ENCODE measurements at regions of chr9 and their contacts with region 1.

Region 1: GRCh38 chr9:94014065-94014654 is 59.0 kb upstream of the BARX1 start:
- DNase-seq: peak in 1 of 2 experiments; percentile 16
- H3K4me3 ChIP-seq: no peak overlapping the region
- H3K27ac ChIP-seq: no peak overlapping the region
- H3K4me1 ChIP-seq: no peaks in the 10 kb centered on the region
- H3K27me3 ChIP-seq: no peaks in the 10 kb centered on the region
- CTCF ChIP-seq: peak; percentile 73

Region 2: GRCh38 chr9:93984860-93985259 is 29.3 kb before region 1 on chr9:
- CTCF ChIA-PET with region 1: no interaction called
- POLR2A ChIA-PET with region 1: no interaction called
- intact Hi-C with region 1: no loop called
- DNase-seq: no peak
- H3K4me3 ChIP-seq: no peak overlapping the region
- H3K27ac ChIP-seq: no peak overlapping the region
- H3K4me1 ChIP-seq: no peaks in the 10 kb centered on the region
- H3K27me3 ChIP-seq: peaks cover 6% of the 10 kb centered on the region
- CTCF ChIP-seq: no peak

Region 3: GRCh38 chr9:94026816-94027215 is 12.7 kb after region 1 on chr9:
- CTCF ChIA-PET with region 1: no interaction called
- POLR2A ChIA-PET with region 1: no interaction called
- intact Hi-C with region 1: no loop called
- DNase-seq: no peak
- H3K4me3 ChIP-seq: no peak overlapping the region
- H3K27ac ChIP-seq: no peak overlapping the region
- H3K4me1 ChIP-seq: peaks cover 6% of the 10 kb centered on the region; the same call in 1 of the 2 replicates
- H3K27me3 ChIP-seq: no peaks in the 10 kb centered on the region
- CTCF ChIP-seq: no peak

Region 4: GRCh38 chr9:94259077-94259892 is 245.1 kb after region 1 on chr9 and contains the start of gene ZNF169:
- CTCF ChIA-PET with region 1: interaction called, 10 read pairs
- POLR2A ChIA-PET with region 1: no interaction called
- intact Hi-C with region 1: no loop called
- DNase-seq: peak; percentile 83 to 91
- H3K4me3 ChIP-seq: peak within 1 kb of the TSS; percentile 79
- H3K27ac ChIP-seq: peak within 1 kb of the TSS; percentile 31; the same call in 1 of the 2 replicates
- H3K4me1 ChIP-seq: peaks cover 7% of the 10 kb centered on the region
- H3K27me3 ChIP-seq: no peaks in the 10 kb centered on the region
- CTCF ChIP-seq: no peak
- total RNA-seq, gene ZNF169: 8.5 and 11.3 TPM in 2 replicates

Measured in PC-9 (cell line).